Activated CD8-positive, alpha-beta T cell treated with anti-CD3 and anti-CD28 coated beads for 36 hours (primary cell): ENCODE measurements at regions of chr7 and their contacts with region 1.

Region 1: DNA sequence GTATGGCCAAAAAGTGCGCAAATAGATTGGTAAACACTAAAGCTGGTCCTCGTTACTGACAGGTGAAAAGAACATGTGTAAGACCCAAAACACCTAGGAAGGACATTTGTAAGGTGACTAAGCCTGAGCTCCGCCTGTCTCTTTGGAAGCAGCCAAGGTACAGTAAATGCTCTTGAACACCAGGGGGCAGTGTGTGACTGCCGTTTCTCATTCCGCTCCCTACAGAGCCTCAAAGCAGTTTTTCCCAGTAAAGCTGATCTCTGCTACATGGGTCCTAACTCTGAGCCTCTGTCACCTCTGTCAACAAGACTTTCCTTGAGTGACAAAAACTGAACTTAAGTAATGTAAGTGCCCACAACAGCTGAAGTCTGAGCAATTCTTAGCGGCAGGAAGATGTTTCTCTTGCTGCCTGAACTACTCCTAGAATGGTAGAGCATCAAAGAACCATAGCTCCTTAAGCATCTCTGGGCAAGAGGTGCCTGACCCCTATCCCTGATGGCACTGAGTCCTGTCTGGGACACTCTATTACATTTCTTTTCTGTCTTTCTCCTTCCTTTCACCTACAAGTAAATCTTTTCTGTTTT is 238.0 kb upstream of the INHBA start:
- DNase-seq: peak; percentile 60
- ATAC-seq: peak; percentile 83
- H3K4me3 Mint-ChIP-seq: no peak overlapping the region
- H3K27ac Mint-ChIP-seq: no peak overlapping the region
- H3K4me1 Mint-ChIP-seq: peaks cover 8% of the 10 kb centered on the region
- H3K27me3 Mint-ChIP-seq: peaks cover 37% of the 10 kb centered on the region
- CTCF ChIP-seq: peak; percentile 73

Region 2: DNA sequence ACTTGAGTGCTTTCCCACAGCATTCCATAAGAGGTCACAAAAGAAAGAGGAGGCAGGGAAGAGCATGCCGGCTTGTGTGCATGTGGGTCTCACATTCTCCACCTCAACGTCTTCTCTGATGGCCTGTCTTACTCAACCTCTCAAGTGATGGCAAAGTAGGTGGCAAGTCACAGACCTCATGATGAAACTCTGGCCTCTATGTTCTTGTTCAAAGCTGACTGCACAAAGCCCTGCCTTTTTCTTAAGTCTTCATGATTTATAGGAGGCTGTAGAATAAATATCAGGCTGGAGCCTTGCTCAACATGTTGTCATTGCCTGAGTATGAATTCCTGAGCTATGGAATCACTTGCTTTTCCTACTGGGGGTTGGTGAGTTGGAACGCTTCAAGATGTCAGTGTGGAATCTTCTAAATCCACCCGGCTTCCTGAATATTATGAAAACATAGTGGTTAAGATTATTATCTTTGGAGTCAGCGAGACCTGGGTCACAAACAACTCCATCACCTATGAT is 24.3 kb before region 1 on chr7:
- CTCF ChIA-PET with region 1: interaction called, 20 read pairs
- POLR2A ChIA-PET with region 1: no interaction called
- intact Hi-C with region 1: no loop called
- DNase-seq: no peak
- ATAC-seq: no peak
- H3K4me3 Mint-ChIP-seq: no peak overlapping the region
- H3K27ac Mint-ChIP-seq: no peak overlapping the region
- H3K4me1 Mint-ChIP-seq: peaks cover 3% of the 10 kb centered on the region
- H3K27me3 Mint-ChIP-seq: peaks cover 29% of the 10 kb centered on the region
- CTCF ChIP-seq: no peak

Region 3: GRCh38 chr7:41930538-41931262 is 10.2 kb before region 1 on chr7:
- CTCF ChIA-PET with region 1: interaction called, 15 read pairs
- POLR2A ChIA-PET with region 1: no interaction called
- intact Hi-C with region 1: no loop called
- DNase-seq: no peak
- ATAC-seq: no peak
- H3K4me3 Mint-ChIP-seq: no peak overlapping the region
- H3K27ac Mint-ChIP-seq: no peak overlapping the region
- H3K4me1 Mint-ChIP-seq: peaks cover 7% of the 10 kb centered on the region
- H3K27me3 Mint-ChIP-seq: peaks cover 16% of the 10 kb centered on the region
- CTCF ChIP-seq: no peak

Region 4: DNA sequence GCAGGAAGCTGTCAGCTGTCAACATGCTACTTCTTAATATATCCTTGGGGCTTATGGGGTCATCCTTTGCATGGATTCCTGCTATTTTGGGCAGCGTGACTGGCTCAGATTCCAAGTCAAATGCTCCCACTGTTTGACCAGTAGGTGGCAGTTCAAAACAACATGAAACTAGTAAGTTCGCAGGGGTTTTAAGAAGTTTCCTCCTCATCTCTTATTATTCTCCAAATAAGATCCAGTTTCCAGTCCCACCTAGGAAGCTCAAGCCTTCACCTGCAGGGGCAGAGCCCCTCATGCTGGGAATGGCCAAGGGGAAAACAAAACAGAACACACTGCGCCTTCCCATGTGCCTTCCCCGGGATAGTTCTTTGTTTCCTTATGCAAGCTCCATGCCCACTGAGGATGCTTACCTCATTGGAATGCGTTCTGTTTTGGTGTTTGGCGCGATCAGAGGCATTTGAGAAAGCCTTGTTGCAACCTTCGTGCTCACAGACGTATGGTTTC is 36.3 kb after region 1 on chr7:
- CTCF ChIA-PET with region 1: interaction called, 16 read pairs
- POLR2A ChIA-PET with region 1: no interaction called
- intact Hi-C with region 1: no loop called
- DNase-seq: peak; percentile 7
- ATAC-seq: no peak
- H3K4me3 Mint-ChIP-seq: no peak overlapping the region
- H3K27ac Mint-ChIP-seq: no peak overlapping the region
- H3K4me1 Mint-ChIP-seq: no peaks in the 10 kb centered on the region
- H3K27me3 Mint-ChIP-seq: peaks cover 9% of the 10 kb centered on the region
- CTCF ChIP-seq: peak; percentile 40

Region 5: GRCh38 chr7:42151309-42151708 is 210.5 kb after region 1 on chr7:
- CTCF ChIA-PET with region 1: no interaction called
- POLR2A ChIA-PET with region 1: no interaction called
- intact Hi-C with region 1: no loop called
- DNase-seq: no peak
- ATAC-seq: no peak
- H3K4me3 Mint-ChIP-seq: no peak overlapping the region
- H3K27ac Mint-ChIP-seq: no peak overlapping the region
- H3K4me1 Mint-ChIP-seq: no peaks in the 10 kb centered on the region
- H3K27me3 Mint-ChIP-seq: no peaks in the 10 kb centered on the region
- CTCF ChIP-seq: no peak

Region 6: GRCh38 chr7:42886129-42886528 is 945.3 kb after region 1 on chr7:
- CTCF ChIA-PET with region 1: interaction called, 4 read pairs
- POLR2A ChIA-PET with region 1: no interaction called
- intact Hi-C with region 1: loop called (anchors 10 kb)
- DNase-seq: no peak
- ATAC-seq: no peak
- H3K4me3 Mint-ChIP-seq: no peak overlapping the region
- H3K27ac Mint-ChIP-seq: no peak overlapping the region
- H3K4me1 Mint-ChIP-seq: peaks cover 20% of the 10 kb centered on the region
- H3K27me3 Mint-ChIP-seq: peaks cover 1% of the 10 kb centered on the region
- CTCF ChIP-seq: peak; percentile 55